Aorta (tissue), 5 donors: ENCODE measurements at regions of chr17 and their contacts with region 1.

Region 1: GRCh38 chr17:29777663-29778062 is 152.4 kb downstream of the SSH2 start:
- DNase-seq: no peak
- ATAC-seq: no peak
- H3K4me3 ChIP-seq: no peak overlapping the region
- H3K27ac ChIP-seq: no peak overlapping the region
- H3K4me1 ChIP-seq: no peaks in the 10 kb centered on the region
- H3K27me3 ChIP-seq: no peaks in the 10 kb centered on the region

Region 2: DNA sequence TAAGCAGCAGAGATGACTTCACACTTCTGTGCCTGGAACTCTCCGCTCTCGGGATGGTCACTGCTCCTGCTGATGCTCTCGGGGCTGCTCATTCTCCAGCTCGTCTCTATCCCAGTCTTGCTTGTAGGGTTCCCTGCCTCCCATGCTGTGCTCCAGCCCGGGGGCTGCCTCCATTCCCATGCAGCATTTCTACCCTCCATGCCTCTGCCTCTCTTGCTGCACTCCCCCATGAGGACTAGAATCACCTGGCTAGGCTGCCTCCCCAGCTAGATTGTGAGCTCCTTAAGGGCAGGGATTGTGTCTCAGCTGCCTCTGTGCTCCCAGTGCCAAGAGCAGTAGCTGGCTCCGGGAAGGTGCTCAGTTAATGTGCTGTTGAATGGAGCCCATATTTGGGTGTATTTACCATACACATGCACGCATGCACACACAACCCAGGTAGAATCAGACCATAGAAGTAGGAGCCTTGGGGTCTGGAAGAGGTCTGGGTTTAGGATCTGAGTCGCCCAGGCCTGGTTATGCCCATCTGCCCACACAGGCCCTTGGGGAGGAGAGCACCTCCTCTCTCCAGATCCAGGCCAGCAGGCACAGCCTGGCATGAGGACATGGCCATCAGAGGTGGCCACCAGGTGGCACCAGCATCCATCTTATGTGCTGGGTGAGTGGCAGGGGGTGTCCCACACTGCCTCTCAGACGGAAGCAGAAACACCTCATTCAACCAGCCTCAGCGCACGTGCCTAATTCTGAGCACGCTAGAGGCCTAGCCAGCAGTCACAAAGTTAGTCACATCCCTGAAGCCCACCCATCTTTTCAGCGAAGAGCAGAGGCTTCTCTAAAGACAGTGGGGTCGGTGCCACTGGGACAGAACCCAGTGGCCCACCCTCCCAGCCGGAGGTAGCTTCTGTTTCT is 197.5 kb before region 1 on chr17:
- intact Hi-C with region 1: loop called (anchors 5 kb)
- DNase-seq: peak; percentile 89 to 96
- ATAC-seq: peak; percentile 86
- H3K4me3 ChIP-seq: no peak overlapping the region
- H3K27ac ChIP-seq: no peak overlapping the region
- H3K4me1 ChIP-seq: no peaks in the 10 kb centered on the region
- H3K27me3 ChIP-seq: no peaks in the 10 kb centered on the region

Region 3: DNA sequence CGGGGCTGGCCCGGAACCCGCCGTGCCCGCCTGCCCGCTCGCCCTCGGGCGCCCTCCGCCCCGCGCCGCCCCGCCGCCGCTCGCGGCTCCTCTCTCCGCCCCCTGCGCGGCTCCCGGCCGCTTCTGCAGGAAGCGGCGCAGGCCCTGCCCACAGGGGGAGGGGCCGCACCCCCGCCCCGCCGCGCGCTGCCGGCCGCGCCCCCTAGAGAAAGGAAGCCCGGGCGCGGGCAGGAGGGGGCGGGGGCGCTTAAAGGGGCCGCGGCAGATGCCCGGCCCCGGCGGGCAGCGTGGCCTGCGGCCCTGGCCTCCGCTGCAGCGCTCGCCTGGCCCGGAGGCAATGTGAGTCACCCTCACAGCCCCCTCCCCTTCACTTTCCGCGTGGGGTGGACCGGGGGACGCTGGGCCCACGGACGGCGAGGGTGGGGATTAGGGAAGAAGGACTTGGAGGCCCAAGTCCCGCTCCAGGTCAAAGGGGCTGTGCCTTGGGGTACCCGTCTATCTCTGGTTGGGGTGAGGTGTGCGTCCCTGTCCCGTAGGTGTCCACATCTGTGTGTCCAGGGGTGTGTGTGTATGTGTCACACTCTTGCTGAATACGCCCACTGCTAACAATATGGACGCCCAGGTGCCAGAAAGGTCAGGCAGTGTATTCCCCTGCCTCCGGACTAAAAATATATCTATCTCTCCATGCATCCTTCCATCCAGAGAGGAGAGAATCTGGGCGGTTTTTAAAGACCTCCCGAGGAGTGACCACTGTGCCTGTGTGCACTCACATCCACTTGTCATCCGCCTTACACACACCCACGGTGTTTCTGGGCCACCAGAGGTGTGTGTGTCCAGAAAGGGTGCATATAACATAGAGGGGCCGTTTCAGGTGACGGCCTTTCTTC is 187.9 kb before region 1 on chr17 and contains the start of gene GIT1:
- intact Hi-C with region 1: loop called (anchors 5 kb)
- DNase-seq: peak; percentile 91 to 93
- ATAC-seq: peak; percentile 83
- H3K4me3 ChIP-seq: peak within 1 kb of the TSS; percentile 29 to 73
- H3K27ac ChIP-seq: peak within 1 kb of the TSS in 1 of 2 donors; percentile 37
- H3K4me1 ChIP-seq: peaks cover 0 to 2% of the 10 kb centered on the region in 2 donors
- H3K27me3 ChIP-seq: no peaks in the 10 kb centered on the region
- total RNA-seq, gene GIT1: 38.5 to 47.0 TPM

Region 4: DNA sequence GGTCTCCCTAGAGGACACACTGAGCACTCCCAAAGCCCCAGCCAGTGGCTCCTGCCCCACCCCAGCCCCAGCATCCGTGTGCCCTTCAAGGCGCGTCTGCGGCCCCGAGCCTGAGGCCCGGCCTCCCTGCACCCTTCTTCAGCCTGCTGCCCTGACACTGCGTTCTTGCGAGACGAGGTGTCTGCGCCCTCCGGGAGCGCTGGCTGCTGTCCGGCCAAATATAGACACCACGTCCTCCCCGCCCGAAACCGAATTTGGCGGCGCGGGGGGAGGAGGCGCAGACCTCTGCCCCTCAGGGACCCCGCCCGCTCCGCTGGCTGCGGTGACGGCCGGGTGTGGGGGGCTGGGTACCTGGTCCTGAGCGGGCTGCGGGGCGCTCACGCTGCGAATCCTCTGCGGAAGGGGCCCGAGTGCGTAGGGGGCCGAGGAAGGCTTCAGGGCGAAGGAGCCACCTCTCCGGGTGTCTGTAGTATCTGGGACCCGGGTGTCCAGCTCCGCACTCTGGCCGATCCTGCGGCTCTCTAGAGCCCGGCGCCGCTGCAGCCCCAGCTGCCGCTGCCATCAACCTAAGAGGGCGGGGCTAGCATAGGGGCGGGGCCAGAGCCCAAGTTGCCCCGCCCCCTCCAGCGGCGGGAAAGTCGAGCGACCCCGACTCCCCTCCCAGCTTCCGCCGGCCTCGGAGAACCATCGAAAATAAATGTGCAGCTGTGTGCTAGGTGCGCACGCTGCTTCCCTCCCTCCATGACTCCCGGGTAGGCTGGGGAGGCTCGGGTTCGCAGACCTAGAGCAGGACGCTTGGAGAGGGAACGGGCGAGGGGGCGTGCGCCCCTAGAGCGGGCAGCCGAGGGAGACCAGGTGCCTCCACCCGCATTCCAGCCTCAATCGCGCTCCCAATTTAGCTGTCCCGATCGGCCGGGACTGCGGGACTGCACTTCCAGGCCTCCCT is 155.1 kb before region 1 on chr17 and contains the start of gene CORO6:
- intact Hi-C with region 1: loop called in 1 of 2 experiments (anchors 5 kb)
- DNase-seq: peak in 1 of 2 donors; percentile 88
- ATAC-seq: peak; percentile 86
- H3K4me3 ChIP-seq: peak within 1 kb of the TSS; percentile 51 to 65
- H3K27ac ChIP-seq: peak within 1 kb of the TSS in 1 of 2 donors; percentile 28
- H3K4me1 ChIP-seq: no peaks in the 10 kb centered on the region
- H3K27me3 ChIP-seq: no peaks in the 10 kb centered on the region
- total RNA-seq, gene CORO6: 9.9 to 12.3 TPM

Region 5: GRCh38 chr17:29640413-29640812 is 137.2 kb before region 1 on chr17:
- intact Hi-C with region 1: loop called in 1 of 2 experiments (anchors 5 kb)
- DNase-seq: no peak
- ATAC-seq: no peak
- H3K4me3 ChIP-seq: no peak overlapping the region
- H3K27ac ChIP-seq: no peak overlapping the region
- H3K4me1 ChIP-seq: peaks cover 0 to 8% of the 10 kb centered on the region in 2 donors
- H3K27me3 ChIP-seq: no peaks in the 10 kb centered on the region

Region 6: GRCh38 chr17:29954405-29954804 is 176.7 kb after region 1 on chr17:
- intact Hi-C with region 1: no loop called
- DNase-seq: no peak
- ATAC-seq: no peak
- H3K4me3 ChIP-seq: no peak overlapping the region
- H3K27ac ChIP-seq: no peak overlapping the region
- H3K4me1 ChIP-seq: no peaks in the 10 kb centered on the region
- H3K27me3 ChIP-seq: no peaks in the 10 kb centered on the region